ENCODE measurements at regions of chr5 and their contacts with region 1.

Region 1: DNA sequence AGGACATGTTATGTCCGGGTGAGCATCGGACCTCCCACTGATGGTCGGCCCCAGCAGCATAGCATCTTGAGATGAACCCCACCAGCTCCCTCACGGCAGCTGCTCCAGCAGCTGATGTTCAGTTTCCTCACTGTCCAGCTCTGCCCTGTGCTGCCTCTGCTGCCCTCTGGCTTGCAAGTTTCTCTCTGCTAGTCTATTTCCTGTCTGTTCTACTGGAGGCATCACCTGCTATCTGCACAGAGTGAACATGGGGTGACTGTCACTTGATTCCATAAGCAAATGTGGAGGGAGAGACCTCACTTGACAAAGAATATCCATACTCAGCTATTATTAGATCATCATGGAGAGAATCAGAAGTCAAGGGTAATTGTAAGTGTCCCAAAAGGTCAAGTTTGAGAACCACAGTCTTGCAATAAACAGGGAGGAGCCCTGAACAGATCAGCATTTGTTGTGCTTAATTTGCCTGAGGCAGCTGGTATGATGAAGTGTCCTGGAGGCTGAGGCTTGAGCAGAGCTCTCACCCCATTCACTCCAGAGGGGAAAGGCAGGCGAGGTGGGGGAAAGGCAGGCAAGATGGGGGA is 702.8 kb downstream of the SEMA5A start:
- DNase-seq: peak; percentile 21
- H3K4me3 ChIP-seq: no peak overlapping the region
- H3K27ac ChIP-seq: no peak overlapping the region
- H3K4me1 ChIP-seq: peaks cover 5% of the 10 kb centered on the region
- H3K27me3 ChIP-seq: no peaks in the 10 kb centered on the region
- CTCF ChIP-seq: peak; percentile 41 to 78

Region 2: GRCh38 chr5:7927466-7928375 is 915.3 kb before region 1 on chr5:
- CTCF ChIA-PET with region 1: no interaction called
- dilution Hi-C with region 1: no loop called
- in situ Hi-C with region 1: no loop called
- intact Hi-C with region 1: loop called (anchors 5 kb)
- DNase-seq: peak; percentile 33
- H3K4me3 ChIP-seq: no peak overlapping the region
- H3K27ac ChIP-seq: no peak overlapping the region
- H3K4me1 ChIP-seq: no peaks in the 10 kb centered on the region
- H3K27me3 ChIP-seq: no peaks in the 10 kb centered on the region
- CTCF ChIP-seq: peak; percentile 82 to 84

Region 3: DNA sequence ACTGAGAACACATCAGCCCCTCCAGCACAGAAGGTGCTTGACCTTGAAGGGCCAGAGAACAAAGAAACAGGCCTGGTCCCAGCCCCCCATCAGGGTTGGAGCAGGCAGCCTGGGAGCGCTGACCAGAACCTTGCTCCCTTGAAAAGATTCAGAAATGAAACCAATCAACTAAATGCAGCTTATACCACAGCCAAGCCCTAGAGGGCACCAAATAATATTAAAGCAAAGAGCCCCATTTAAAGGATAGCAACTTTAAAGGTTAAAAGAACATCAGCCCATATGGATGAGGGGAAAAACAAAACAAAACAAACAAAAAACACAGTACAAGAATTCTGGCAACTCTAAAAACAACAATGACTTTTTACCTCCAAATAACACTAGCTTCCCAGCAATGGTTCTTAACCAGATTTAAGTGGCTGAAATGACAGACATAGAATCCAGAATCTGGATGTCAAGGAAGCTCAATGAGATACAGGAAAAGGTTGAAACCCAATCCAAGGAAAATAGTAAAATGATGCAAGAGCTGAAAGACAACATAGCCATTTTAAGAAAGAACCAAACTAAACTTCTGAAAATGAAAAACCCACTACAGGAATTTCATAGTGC is 502.2 kb before region 1 on chr5:
- CTCF ChIA-PET with region 1: no interaction called
- dilution Hi-C with region 1: no loop called
- in situ Hi-C with region 1: no loop called
- intact Hi-C with region 1: loop called (anchors 2 kb)
- DNase-seq: peak; percentile 6
- H3K4me3 ChIP-seq: no peak overlapping the region
- H3K27ac ChIP-seq: no peak overlapping the region
- H3K4me1 ChIP-seq: no peaks in the 10 kb centered on the region
- H3K27me3 ChIP-seq: no peaks in the 10 kb centered on the region
- CTCF ChIP-seq: peak; percentile 18 to 52

Region 4: GRCh38 chr5:8386719-8387288 is 456.3 kb before region 1 on chr5:
- CTCF ChIA-PET with region 1: no interaction called
- dilution Hi-C with region 1: no loop called
- in situ Hi-C with region 1: no loop called
- intact Hi-C with region 1: no loop called
- DNase-seq: no peak
- H3K4me3 ChIP-seq: no peak overlapping the region
- H3K27ac ChIP-seq: no peak overlapping the region
- H3K4me1 ChIP-seq: no peaks in the 10 kb centered on the region
- H3K27me3 ChIP-seq: no peaks in the 10 kb centered on the region
- CTCF ChIP-seq: no peak